ENCODE measurements at regions of chr6 and their contacts with region 1.

Region 1: DNA sequence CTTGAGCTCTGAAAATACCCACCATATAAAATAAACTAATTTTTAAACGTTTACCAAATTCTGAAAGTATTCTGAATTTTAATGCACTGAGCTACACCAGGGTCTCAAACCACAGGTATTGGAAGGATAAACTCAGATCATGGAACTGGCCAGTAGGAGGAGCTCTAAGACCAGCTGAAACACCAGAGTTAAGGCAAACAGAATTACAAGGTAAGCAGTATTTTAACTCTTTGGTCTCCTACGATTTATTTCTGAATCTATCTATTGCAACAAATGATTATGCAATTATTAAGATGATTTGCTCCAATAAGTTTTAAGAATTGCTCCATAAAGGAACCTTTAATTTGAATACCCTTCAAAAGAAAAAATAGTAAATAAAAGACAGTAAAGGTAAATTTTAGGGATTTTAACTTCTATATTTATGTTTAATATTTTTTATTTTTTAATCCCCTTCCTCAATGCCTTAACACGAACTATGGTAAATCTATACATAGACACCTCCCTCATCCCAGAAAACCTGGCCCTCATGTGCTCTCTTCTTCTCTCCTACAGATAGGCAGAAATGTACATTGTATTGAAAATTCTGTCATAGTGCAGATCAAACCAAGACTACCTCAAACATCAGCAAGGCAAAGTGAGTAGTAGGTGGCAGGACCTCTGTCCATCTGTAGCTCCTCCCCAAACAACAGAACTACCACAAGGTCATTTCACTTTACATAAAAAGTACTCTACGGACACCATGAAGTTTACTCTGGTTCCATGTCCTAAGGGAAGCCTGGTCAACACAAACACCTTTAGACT is 58.4 kb downstream of the SMLR1 start:
- DNase-seq: peak; percentile 32 to 90
- ATAC-seq: peak; percentile 80 to 92 (median 89)
- H3K4me3 ChIP-seq: no peak overlapping the region
- H3K4me3 Mint-ChIP-seq: no peak overlapping the region
- H3K27ac ChIP-seq: no peak overlapping the region
- H3K27ac Mint-ChIP-seq: no peak overlapping the region
- H3K4me1 ChIP-seq: no peaks in the 10 kb centered on the region
- H3K4me1 Mint-ChIP-seq: no peaks in the 10 kb centered on the region
- H3K27me3 ChIP-seq: no peaks in the 10 kb centered on the region
- H3K27me3 Mint-ChIP-seq: no peaks in the 10 kb centered on the region
- CTCF ChIP-seq: peak; percentile 97

Region 2: DNA sequence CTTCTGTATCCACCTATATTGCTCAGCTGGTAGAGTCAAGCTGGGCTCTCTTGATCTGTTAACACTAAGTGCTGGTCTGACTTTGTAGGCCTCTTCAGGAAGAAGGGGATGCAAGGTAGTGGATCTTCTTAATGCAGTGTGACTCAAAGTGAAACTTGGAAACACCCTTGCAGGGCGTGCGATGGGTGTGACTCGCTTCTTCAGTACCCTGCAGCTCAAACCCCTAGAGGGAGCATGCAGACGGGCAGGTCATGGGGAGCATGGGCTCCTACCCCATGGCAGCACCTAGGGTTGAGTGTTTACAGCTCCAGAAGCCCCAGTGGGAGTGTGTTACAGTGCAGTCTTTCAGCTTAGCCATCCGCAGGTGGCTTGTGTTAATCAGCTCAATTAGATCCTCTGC is 662.1 kb before region 1 on chr6:
- intact Hi-C with region 1: no loop called
- DNase-seq: peak; percentile 48 to 86
- ATAC-seq: peak; percentile 84 to 88 (median 88)
- H3K4me3 ChIP-seq: no peak overlapping the region
- H3K4me3 Mint-ChIP-seq: peak overlapping the region; percentile 94
- H3K27ac ChIP-seq: peak overlapping the region; percentile 61
- H3K27ac Mint-ChIP-seq: peak overlapping the region; percentile 91 to 93
- H3K4me1 ChIP-seq: peaks cover 26% of the 10 kb centered on the region
- H3K4me1 Mint-ChIP-seq: peaks cover 26 to 40% of the 10 kb centered on the region in 2 donors
- H3K27me3 ChIP-seq: no peaks in the 10 kb centered on the region
- H3K27me3 Mint-ChIP-seq: no peaks in the 10 kb centered on the region
- CTCF ChIP-seq: peak; percentile 33

Region 3: DNA sequence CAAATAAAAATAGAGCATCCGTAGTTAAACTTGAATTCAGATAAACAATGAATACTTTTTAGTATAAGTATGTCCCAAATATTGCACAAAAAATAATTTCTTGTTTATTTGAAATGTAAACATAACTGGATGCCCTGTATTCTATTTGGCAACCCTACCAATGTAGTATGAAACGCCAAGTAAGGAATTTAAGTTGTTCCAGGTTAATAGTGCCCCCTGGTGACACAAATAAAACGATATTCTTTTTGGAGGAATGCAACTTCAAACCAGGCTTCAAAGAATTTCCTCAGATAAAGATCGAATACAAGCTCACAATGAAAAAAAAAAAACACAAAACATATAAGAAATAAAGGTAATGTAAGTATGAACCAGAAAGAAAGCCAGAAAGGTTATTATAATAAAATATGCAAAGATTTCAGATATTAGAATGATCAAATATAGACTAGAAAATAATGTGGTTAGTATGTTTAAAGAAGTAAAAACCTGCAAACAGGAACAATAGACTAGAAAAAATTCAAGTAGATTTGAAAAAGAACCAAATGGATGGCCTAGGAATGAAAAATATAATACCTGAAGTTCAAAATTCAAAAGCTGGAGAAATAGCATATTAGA is 231.3 kb after region 1 on chr6:
- intact Hi-C with region 1: loop called (anchors 1 kb)
- DNase-seq: peak in 1 of 2 donors; percentile 70
- ATAC-seq: no peak
- H3K4me3 ChIP-seq: no peak overlapping the region
- H3K4me3 Mint-ChIP-seq: no peak overlapping the region
- H3K27ac ChIP-seq: no peak overlapping the region
- H3K27ac Mint-ChIP-seq: no peak overlapping the region
- H3K4me1 ChIP-seq: no peaks in the 10 kb centered on the region
- H3K4me1 Mint-ChIP-seq: no peaks in the 10 kb centered on the region
- H3K27me3 ChIP-seq: no peaks in the 10 kb centered on the region
- H3K27me3 Mint-ChIP-seq: peaks cover 0 to 2% of the 10 kb centered on the region in 2 donors
- CTCF ChIP-seq: peak; percentile 66

Region 4: GRCh38 chr6:131532580-131533039 is 647.0 kb after region 1 on chr6:
- intact Hi-C with region 1: loop called (anchors 1 kb)
- DNase-seq: peak in 1 of 2 donors; percentile 21
- ATAC-seq: no peak
- H3K4me3 ChIP-seq: no peak overlapping the region
- H3K4me3 Mint-ChIP-seq: no peak overlapping the region
- H3K27ac ChIP-seq: no peak overlapping the region
- H3K27ac Mint-ChIP-seq: peak overlapping the region in 1 of 2 donors; percentile 63
- H3K4me1 ChIP-seq: no peaks in the 10 kb centered on the region
- H3K4me1 Mint-ChIP-seq: peaks cover 11 to 13% of the 10 kb centered on the region in 2 donors
- H3K27me3 ChIP-seq: no peaks in the 10 kb centered on the region
- H3K27me3 Mint-ChIP-seq: peaks cover 4 to 7% of the 10 kb centered on the region in 2 donors
- CTCF ChIP-seq: no peak

Region 5: GRCh38 chr6:131597446-131597845 is 711.9 kb after region 1 on chr6:
- intact Hi-C with region 1: loop called (anchors 1 kb)
- DNase-seq: peak in 1 of 2 donors; percentile 43
- ATAC-seq: peak in 2 of 3 donors; percentile 58 to 61
- H3K4me3 ChIP-seq: no peak overlapping the region
- H3K4me3 Mint-ChIP-seq: no peak overlapping the region
- H3K27ac ChIP-seq: no peak overlapping the region
- H3K27ac Mint-ChIP-seq: no peak overlapping the region
- H3K4me1 ChIP-seq: no peaks in the 10 kb centered on the region
- H3K4me1 Mint-ChIP-seq: no peaks in the 10 kb centered on the region
- H3K27me3 ChIP-seq: no peaks in the 10 kb centered on the region
- H3K27me3 Mint-ChIP-seq: no peaks in the 10 kb centered on the region
- CTCF ChIP-seq: peak; percentile 33

Region 6: GRCh38 chr6:131627724-131628682 is 742.4 kb after region 1 on chr6 and contains the start of gene MED23:
- intact Hi-C with region 1: loop called (anchors 1 kb)
- DNase-seq: peak; percentile 92 to 96
- ATAC-seq: peak; percentile 91 to 97 (median 96)
- H3K4me3 ChIP-seq: peak within 1 kb of the TSS; percentile 84
- H3K4me3 Mint-ChIP-seq: peak within 1 kb of the TSS; percentile 100
- H3K27ac ChIP-seq: peak within 1 kb of the TSS; percentile 54
- H3K27ac Mint-ChIP-seq: peak within 1 kb of the TSS; percentile 94 to 95
- H3K4me1 ChIP-seq: peaks cover 3% of the 10 kb centered on the region
- H3K4me1 Mint-ChIP-seq: peaks cover 25 to 34% of the 10 kb centered on the region in 2 donors
- H3K27me3 ChIP-seq: no peaks in the 10 kb centered on the region
- H3K27me3 Mint-ChIP-seq: no peaks in the 10 kb centered on the region
- CTCF ChIP-seq: peak; percentile 84
- total RNA-seq, gene MED23: 63.8 to 71.2 (median 67.4) TPM

Region 7: DNA sequence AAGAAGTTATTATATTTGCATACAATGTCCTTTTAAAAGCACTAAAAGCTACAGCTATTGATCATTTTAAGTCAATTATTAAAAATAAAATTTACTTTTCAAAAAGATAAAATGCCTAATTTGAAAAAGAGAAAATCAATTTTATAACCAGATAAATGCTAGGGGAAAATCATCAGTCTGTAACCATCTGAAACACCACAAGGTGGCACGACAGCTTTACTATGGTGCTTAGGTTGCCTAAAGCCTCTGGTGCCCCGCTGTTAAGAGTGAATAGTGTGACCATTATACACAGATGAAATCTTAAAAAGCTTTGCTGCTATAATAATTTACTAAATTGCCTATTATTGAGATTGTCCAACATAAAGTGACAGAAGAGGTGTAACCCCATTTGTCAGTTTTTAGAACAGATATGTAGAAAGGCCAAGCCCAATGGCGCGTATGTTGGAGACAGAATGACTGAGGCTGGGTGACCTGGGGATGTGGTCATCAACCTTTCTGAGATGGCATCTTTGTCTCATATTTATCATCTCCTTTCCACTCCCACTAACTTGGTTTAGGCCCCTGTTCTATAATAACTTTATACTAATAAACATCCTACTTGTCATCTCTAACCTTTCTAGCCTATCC is 1414.8 kb after region 1 on chr6:
- intact Hi-C with region 1: loop called (anchors 10 kb)
- DNase-seq: peak in 1 of 2 donors; percentile 45
- ATAC-seq: peak in 2 of 3 donors; percentile 61 to 64
- H3K4me3 ChIP-seq: no peak overlapping the region
- H3K4me3 Mint-ChIP-seq: no peak overlapping the region
- H3K27ac ChIP-seq: no peak overlapping the region
- H3K27ac Mint-ChIP-seq: no peak overlapping the region
- H3K4me1 ChIP-seq: no peaks in the 10 kb centered on the region
- H3K4me1 Mint-ChIP-seq: no peaks in the 10 kb centered on the region
- H3K27me3 ChIP-seq: no peaks in the 10 kb centered on the region
- H3K27me3 Mint-ChIP-seq: peaks cover 6 to 19% of the 10 kb centered on the region in 2 donors
- CTCF ChIP-seq: peak; percentile 20